Activated CD4-positive, alpha-beta memory T cell treated with anti-CD3 and anti-CD28 coated beads for 36 hours (primary cell): ENCODE measurements at regions of chr19 and their contacts with region 1.

Region 1: GRCh38 chr19:48468775-48469288 is 337 bp upstream of the CYTH2 start:
- DNase-seq: peak; percentile 100
- H3K4me3 Mint-ChIP-seq: peak overlapping the region; percentile 83
- H3K27ac Mint-ChIP-seq: peak overlapping the region; percentile 84
- H3K4me1 Mint-ChIP-seq: peaks cover 22% of the 10 kb centered on the region
- H3K27me3 Mint-ChIP-seq: no peaks in the 10 kb centered on the region

Region 2: DNA sequence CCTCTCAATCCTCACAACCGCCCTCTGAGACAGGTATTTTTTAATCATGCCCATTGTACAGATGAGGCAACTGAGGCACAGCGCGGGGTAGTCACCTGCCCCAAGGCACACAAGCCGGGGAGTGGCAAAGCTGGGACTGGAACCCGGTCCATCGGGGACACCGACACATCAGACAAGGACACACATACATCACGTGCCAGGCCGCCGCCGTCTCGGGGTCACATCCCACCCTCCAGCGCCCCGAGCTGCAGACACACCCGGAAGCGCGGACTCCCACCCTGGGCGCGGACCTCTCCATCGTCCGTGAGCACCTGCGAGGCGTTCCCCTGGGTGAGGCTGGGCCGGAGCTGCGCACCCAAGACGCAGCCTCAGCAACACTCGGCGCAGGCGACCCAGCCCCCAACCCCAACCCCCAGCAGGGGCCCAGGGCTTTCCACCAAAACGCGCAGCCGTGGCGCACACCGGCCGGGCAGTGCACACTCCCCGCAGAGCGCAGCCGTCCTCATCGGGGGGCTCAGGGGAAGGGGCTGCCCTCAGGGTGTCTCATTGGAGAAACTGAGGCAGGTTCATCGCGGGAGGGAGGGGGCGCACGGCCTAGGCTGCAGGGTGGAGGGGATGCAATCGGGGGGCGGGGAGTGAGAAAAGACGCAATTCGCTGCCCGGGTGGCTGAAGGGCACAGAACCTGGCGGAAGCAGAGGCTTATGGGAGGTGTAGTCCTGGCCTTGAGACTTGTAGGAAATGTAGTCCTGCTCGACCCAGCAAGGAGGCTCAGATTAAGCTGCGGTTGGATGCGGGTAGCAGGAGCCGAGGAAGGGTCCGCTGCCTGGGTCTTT is 44.7 kb after region 1 on chr19:
- CTCF ChIA-PET with region 1: no interaction called
- POLR2A ChIA-PET with region 1: no interaction called
- intact Hi-C with region 1: loop called (anchors 2 kb)
- DNase-seq: peak; percentile 85
- H3K4me3 Mint-ChIP-seq: no peak overlapping the region
- H3K27ac Mint-ChIP-seq: peak overlapping the region; percentile 58
- H3K4me1 Mint-ChIP-seq: peaks cover 14% of the 10 kb centered on the region
- H3K27me3 Mint-ChIP-seq: no peaks in the 10 kb centered on the region